Esophagus squamous epithelium (tissue), 5 donors: ENCODE measurements at regions of chr7 and their contacts with region 1.

Region 1: GRCh38 chr7:13262929-13263530 is 575.6 kb downstream of the ARL4A start:
- DNase-seq: no peak
- H3K4me3 ChIP-seq: no peak overlapping the region
- H3K27ac ChIP-seq: no peak overlapping the region
- H3K4me1 ChIP-seq: no peaks in the 10 kb centered on the region
- H3K27me3 ChIP-seq: no peaks in the 10 kb centered on the region
- CTCF ChIP-seq: peak; percentile 45 to 77 (median 52)
- POLR2A ChIP-seq: no peak

Region 2: DNA sequence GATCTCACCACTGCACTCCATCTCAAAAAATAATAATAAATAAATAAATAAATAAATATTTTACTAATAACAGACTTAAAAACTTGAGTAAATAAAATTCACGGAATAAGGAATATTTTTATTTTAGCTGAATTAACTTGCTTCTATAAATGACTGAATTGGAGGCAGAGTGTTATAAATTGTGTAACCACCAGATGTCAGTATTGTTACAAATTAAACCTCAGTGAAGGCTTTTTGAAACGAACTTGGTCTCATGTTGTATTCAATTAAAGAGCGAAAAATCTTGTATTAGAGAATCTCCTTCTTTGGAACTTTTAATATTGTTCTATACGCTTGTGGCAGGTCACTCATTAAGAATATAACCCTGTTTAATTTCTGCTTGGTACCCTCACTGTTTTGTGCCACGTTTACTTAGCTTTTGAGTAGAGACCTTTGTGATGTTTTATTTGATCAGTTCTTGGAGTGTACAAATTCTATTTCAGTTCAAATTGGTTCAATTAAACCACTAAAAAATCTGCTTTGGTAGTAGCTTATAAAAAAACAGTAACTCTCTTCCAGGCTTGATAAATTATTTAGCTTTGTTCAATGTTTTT is 738.1 kb before region 1 on chr7:
- intact Hi-C with region 1: loop called (anchors 10 kb)
- DNase-seq: no peak
- H3K4me3 ChIP-seq: no peak overlapping the region
- H3K27ac ChIP-seq: no peak overlapping the region
- H3K4me1 ChIP-seq: no peaks in the 10 kb centered on the region
- H3K27me3 ChIP-seq: no peaks in the 10 kb centered on the region
- CTCF ChIP-seq: peak in 5 of 6 experiments; percentile 58 to 74 (median 66)
- POLR2A ChIP-seq: no peak

Region 3: DNA sequence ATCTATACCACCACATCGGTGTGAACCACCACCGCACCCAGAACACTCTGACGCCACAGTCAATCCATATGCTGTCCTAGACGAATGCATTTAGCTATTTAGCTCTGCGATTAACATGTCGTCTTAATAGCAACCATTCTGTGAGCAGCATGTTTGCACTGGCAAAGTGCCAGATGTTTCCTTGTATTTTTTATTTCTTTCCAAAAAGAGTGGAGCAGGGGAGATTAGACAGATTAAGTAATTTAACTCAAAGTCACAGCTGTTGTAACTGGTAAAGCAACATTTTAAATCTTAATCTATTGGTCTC is 632.6 kb before region 1 on chr7:
- intact Hi-C with region 1: loop called (anchors 5 kb)
- DNase-seq: no peak
- H3K4me3 ChIP-seq: no peak overlapping the region
- H3K27ac ChIP-seq: no peak overlapping the region
- H3K4me1 ChIP-seq: peaks cover 0 to 5% (median 0%) of the 10 kb centered on the region in 3 donors
- H3K27me3 ChIP-seq: no peaks in the 10 kb centered on the region
- CTCF ChIP-seq: no peak
- POLR2A ChIP-seq: no peak

Region 4: DNA sequence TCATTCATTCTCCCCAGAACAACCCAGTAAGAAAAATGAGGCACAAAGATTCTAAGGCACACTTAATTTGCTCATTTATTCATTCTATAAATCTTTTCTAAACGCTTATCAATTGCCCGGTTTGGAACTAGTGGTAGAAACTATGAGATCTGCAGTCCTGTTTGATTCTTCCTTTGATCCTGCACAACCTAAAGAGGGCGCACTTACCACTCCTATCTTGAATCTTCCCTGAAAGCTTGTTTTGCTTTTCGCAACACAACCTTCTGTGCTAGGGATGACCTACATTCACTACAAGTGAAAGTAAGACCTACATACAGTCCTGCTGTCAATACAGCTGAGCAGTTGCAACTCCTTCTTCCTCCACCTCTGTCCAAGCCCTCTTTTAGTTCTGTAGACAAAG is 588.2 kb before region 1 on chr7:
- intact Hi-C with region 1: loop called (anchors 10 kb)
- DNase-seq: no peak
- H3K4me3 ChIP-seq: no peak overlapping the region
- H3K27ac ChIP-seq: no peak overlapping the region
- H3K4me1 ChIP-seq: peaks cover 0 to 28% (median 7%) of the 10 kb centered on the region in 3 donors
- H3K27me3 ChIP-seq: no peaks in the 10 kb centered on the region
- CTCF ChIP-seq: peak in 3 of 6 experiments; percentile 27 to 58 (median 41)
- POLR2A ChIP-seq: no peak

Region 5: GRCh38 chr7:13144673-13145072 is 118.4 kb before region 1 on chr7:
- intact Hi-C with region 1: no loop called
- DNase-seq: no peak
- H3K4me3 ChIP-seq: no peak overlapping the region
- H3K27ac ChIP-seq: no peak overlapping the region
- H3K4me1 ChIP-seq: no peaks in the 10 kb centered on the region
- H3K27me3 ChIP-seq: no peaks in the 10 kb centered on the region
- CTCF ChIP-seq: no peak
- POLR2A ChIP-seq: no peak

Region 6: GRCh38 chr7:13433946-13434345 is 170.9 kb after region 1 on chr7:
- intact Hi-C with region 1: no loop called
- DNase-seq: no peak
- H3K4me3 ChIP-seq: no peak overlapping the region
- H3K27ac ChIP-seq: no peak overlapping the region
- H3K4me1 ChIP-seq: no peaks in the 10 kb centered on the region
- H3K27me3 ChIP-seq: no peaks in the 10 kb centered on the region
- CTCF ChIP-seq: no peak
- POLR2A ChIP-seq: no peak